Activated T-helper 2 cell treated with anti-CD3 and anti-CD28 coated beads, Interferon-gamma antibody, Interleukin-2, Interleukin-4, amounts not matched to agents 10 μg/mL and 5 μg/mL and 100 μg/mL, durations not matched to agents 14 hours and 24 hours and 36 hours (primary cell): ENCODE measurements at regions of chr20 and their contacts with region 1.

Region 1: GRCh38 chr20:62926239-62927104 is at the start of gene DIDO1:
- DNase-seq: peak; percentile 86
- H3K4me3 Mint-ChIP-seq: peak within 1 kb of the TSS; percentile 96
- H3K27ac Mint-ChIP-seq: peak within 1 kb of the TSS; percentile 95
- H3K4me1 Mint-ChIP-seq: peaks cover 52% of the 10 kb centered on the region
- H3K27me3 Mint-ChIP-seq: no peaks in the 10 kb centered on the region
- total RNA-seq, gene DIDO1: 57.9 and 59.8 TPM in 2 replicates

Region 2: GRCh38 chr20:62861726-62862336 is 64.6 kb before region 1 on chr20 and contains the start of gene TCFL5:
- intact Hi-C with region 1: loop called (anchors 5 kb)
- DNase-seq: peak; percentile 92
- H3K4me3 Mint-ChIP-seq: peak within 1 kb of the TSS; percentile 51
- H3K27ac Mint-ChIP-seq: no peak within 1 kb of the TSS
- H3K4me1 Mint-ChIP-seq: peaks cover 9% of the 10 kb centered on the region
- H3K27me3 Mint-ChIP-seq: peaks cover 22% of the 10 kb centered on the region
- total RNA-seq, gene TCFL5: 5.7 and 7.1 TPM in 2 replicates

Region 3: DNA sequence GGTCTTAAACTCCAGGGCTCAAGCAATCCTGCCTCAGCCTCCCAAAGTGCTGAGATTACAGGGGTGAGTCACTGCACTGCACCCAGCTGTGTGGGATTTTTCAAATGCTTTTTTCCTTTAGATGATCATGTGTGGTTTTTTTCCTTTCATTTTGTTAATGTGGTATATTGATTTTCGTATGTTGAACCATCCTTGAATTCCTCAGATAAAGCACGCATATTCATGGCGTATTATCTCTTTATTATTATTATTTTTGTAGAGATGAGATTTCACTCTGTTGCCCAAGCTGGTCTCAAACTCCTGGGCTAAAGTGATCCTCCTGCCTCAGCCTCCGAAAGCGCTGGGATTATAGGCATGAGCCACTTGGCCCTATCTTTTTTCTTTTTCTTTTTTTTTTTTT is 788.4 kb after region 1 on chr20:
- intact Hi-C with region 1: no loop called
- DNase-seq: no peak
- H3K4me3 Mint-ChIP-seq: no peak overlapping the region
- H3K27ac Mint-ChIP-seq: no peak overlapping the region
- H3K4me1 Mint-ChIP-seq: peaks cover 20% of the 10 kb centered on the region
- H3K27me3 Mint-ChIP-seq: no peaks in the 10 kb centered on the region